Posterior cingulate gyrus (tissue), 11 donors: ENCODE measurements at regions of chrX and their contacts with region 1.

Region 1: DNA sequence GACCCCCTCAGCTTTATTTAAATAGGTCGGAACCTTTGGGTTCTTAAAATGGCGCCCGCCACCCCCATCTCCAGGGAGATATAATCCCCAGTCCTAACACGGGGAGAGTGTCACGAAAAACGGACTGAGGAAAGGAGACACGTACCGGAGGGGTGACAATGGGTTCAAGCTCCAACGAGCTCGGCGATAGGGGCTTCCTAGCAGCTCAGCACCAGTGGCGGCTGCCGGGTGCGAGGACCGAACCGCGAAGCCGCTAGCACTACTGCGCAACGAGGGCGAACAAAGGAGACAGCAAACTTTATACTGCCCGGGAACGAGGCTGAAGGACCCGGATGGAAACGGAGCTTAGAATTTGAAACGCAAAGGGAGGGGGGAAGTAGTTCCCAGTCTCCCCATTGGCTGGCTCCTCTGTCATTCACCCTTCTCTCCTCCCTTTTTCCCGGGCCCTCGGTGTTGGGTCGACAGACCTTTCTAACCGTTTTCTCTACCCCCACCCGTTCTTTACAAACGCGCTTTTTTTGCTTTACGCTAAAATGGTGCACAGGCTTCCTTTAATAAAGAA is at the start of gene RBMX:
- DNase-seq: peak; percentile 81 to 98 (median 92)

Region 2: DNA sequence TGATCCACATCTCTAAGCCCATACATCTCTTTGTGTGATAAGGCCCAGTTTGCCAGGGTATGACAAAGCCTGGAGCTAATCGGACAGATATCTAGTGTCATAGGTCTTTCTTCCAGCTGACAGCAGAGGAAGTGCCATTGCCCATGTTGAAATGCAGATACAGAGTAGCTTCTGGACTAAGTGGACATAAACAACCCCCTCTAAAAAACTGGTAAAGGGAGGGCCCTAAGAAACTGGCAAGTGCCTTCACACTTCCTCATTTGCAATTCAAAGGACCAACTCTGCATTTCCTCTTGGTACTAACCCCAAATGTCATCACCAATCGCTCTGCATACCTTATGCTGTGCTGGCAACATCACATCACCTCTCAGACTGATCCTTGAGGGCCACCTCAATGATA is 120.6 kb before region 1 on chrX:
- intact Hi-C with region 1: no loop called
- DNase-seq: no peak

Region 3: DNA sequence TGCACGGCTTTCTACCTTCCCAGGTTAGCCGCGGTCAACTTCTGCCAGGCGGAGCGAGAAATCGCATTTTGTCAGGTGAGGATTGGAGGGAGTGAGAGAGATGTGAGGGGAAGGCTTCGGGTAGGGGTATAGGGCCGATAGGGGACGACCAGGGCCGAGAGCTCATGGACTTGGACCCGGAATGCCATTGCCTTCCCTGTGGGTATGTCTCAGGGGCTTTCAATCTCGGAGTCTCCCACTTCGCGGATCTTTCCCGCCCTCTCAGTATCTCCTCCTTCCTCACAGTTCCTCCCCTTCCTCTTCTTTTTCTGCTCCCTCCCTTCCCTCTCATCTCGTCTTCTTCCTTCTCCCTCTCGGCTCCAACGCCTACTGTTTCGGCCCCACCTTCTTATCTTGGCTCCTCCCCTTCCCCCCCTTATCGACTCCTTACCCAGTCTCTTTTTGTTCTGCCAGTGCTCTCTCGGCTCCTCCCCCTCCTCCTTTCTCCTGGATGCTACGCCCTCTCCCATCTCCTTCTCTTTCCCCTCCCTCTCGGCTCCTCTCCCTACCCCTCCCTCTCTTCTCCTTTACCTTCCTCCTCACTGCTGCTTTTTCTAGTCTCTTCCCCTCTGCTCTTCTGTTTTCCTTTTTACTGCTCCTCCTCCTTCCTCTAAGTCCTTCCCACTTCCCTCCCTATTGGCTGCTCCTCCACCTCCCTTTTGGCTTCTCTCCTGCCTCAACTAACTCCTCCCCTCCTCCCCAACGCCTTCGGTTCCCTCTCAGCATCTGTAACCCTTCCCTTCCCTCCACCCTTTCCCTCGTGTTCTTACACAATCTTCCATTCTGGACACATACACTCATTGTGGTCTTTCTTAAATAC is 29.4 kb after region 1 on chrX:
- intact Hi-C with region 1: loop called (anchors 1 kb)
- DNase-seq: peak in 9 of 10 donors; percentile 22 to 90 (median 38)